OCI-LY7 (cell line): ENCODE measurements at regions of chr15 and their contacts with region 1.

Region 1: GRCh38 chr15:85865070-85865684 is 70.5 kb upstream of the KLHL25 start:
- DNase-seq: peak; percentile 39
- H3K4me3 ChIP-seq: no peak overlapping the region
- H3K27ac ChIP-seq: no peak overlapping the region
- H3K4me1 ChIP-seq: no peaks in the 10 kb centered on the region
- CTCF ChIP-seq: peak; percentile 85

Region 2: GRCh38 chr15:86178845-86179244 is 313.7 kb after region 1 on chr15:
- CTCF ChIA-PET with region 1: no interaction called
- POLR2A ChIA-PET with region 1: no interaction called
- intact Hi-C with region 1: loop called (anchors 10 kb)
- DNase-seq: no peak
- H3K4me3 ChIP-seq: no peak overlapping the region
- H3K27ac ChIP-seq: no peak overlapping the region
- H3K4me1 ChIP-seq: no peaks in the 10 kb centered on the region
- CTCF ChIP-seq: peak; percentile 31